OCI-LY7 (cell line): ENCODE measurements at regions of chr17 and their contacts with region 1.

Region 1: GRCh38 chr17:79789534-79790353 is 7.1 kb downstream of the CBX8 start:
- DNase-seq: peak; percentile 70
- H3K4me3 ChIP-seq: no peak overlapping the region
- H3K27ac ChIP-seq: no peak overlapping the region
- H3K4me1 ChIP-seq: peaks cover 8% of the 10 kb centered on the region
- CTCF ChIP-seq: peak; percentile 94

Region 2: GRCh38 chr17:79612468-79613194 is 177.1 kb before region 1 on chr17:
- CTCF ChIA-PET with region 1: no interaction called
- POLR2A ChIA-PET with region 1: no interaction called
- intact Hi-C with region 1: no loop called
- DNase-seq: peak; percentile 72
- H3K4me3 ChIP-seq: no peak overlapping the region
- H3K27ac ChIP-seq: no peak overlapping the region
- H3K4me1 ChIP-seq: no peaks in the 10 kb centered on the region
- CTCF ChIP-seq: peak; percentile 97

Region 3: DNA sequence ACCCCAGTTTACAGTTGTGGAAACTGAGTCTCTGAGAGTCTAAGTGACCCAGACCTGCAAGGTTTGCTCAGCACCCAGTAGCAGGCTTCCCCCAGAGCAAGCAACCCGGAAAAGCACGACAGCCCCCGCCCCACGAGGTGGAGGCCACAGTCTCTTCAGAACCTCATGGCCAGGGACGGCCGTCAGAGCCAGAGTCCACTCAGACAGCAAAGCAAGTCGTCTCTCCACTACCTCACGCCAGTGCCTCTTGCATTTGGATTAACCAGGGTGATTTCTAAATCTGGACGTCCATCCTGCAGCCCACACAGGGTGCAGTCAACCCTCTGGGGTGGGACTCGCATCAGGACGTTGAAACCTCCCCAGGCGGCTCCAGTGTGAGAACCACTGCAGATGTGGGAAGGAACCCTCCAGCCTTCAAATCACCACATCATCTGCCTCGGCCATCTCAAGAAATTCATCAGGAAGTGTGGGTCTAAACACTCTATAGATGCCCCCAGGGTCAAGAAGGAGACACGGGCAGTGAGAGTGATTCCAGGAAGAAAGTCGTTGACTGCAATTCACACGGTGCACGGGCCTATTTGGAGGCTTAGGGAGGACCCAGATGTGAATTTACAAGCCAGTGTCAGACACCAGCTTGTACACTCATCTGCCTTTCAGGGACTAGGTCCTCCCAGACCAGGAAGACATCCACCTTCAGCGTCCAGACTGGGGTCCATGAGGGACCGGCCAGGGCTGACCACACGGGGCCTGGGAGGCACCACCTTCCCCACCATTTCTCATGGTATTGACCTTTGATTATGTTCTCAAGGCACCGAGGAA is 158.7 kb before region 1 on chr17:
- CTCF ChIA-PET with region 1: no interaction called
- POLR2A ChIA-PET with region 1: no interaction called
- intact Hi-C with region 1: no loop called
- DNase-seq: no peak
- H3K4me3 ChIP-seq: no peak overlapping the region
- H3K27ac ChIP-seq: no peak overlapping the region
- H3K4me1 ChIP-seq: no peaks in the 10 kb centered on the region
- CTCF ChIP-seq: no peak

Region 4: DNA sequence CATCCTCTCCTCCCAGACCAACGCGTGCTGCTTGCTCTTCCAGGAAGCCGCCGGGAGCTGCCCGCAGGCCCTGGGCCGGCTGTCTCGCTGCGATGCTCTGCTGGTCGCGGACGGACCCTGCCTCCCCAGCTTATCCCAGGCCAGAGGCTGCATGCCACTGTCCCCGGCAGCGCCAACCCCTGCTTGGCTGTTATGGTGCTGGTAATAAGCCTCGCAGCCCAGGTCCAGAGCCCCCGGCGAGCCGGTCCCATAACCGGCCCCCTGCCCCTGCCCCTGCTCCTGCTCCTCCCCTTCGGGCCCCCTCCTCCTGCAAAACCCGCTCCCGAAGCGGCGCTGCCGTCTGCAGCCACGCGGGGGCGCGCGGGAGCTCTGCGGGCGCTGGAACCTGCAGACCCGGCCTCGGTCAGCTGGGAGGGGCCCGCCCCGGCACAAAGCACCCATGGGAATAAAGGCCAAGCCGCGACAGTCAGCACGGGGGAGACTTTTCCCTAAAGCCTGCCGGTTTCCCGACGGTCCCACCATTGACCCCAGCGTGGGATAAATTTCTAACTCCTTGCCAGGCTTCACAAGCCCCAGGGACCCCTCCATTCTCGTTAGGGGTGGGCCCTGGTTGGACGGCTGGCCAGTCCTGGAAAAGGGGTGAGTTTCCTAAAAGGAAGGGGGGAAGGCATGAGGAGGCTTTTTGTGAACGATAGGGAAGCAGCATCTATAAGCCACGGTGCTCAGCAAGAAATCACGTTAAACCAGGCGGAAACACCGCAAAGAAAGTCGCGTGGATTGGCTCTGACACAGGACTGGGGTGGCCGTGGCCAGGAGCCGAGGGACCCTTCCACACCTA is 47.8 kb before region 1 on chr17:
- CTCF ChIA-PET with region 1: no interaction called
- POLR2A ChIA-PET with region 1: no interaction called
- intact Hi-C with region 1: no loop called
- DNase-seq: peak; percentile 71
- H3K4me3 ChIP-seq: no peak overlapping the region
- H3K27ac ChIP-seq: no peak overlapping the region
- H3K4me1 ChIP-seq: peaks cover 7% of the 10 kb centered on the region
- CTCF ChIP-seq: peak; percentile 98

Region 5: DNA sequence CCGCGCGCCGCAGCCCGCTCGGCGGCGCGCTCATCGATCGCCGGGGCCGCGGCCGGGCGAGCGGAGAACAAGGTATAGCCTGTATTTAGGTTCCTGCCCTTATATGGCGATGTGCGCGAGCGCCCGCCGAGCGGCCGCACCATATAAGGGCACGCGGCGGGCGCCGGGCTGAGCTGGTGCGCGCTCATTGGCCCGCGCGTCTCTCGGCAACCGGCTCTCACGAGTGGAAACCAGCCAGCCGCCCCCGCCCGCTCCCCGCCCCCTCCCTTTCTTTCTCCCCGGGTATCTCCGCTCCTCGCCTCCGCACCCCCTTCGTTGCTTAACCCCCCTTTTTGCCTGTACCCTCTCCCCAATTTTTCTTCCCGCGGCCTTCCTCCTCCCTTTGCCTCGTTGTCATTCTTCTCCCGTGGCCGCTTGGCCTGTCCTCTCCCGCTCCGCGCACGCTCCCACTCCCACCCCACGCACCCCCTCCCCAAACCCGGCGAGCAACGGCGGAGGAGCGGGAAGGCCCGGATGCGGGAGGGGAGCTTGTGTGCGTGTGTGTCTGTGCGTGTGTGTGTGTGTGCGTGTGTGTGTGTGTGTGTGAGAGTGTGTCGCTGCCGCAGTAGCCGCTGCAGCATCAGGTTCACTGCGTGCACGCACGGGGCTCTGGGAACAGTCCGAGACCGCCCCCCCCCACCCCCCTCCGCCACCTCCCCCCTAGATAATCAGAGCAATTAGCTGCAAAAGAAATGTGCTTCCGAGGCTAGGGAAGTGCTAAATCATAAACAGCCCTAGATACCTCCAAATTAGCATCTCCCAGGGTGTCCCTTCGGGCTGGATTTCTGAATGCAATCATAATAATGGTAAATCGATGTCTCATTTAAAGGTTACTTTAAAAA is 20.6 kb after region 1 on chr17:
- CTCF ChIA-PET with region 1: no interaction called
- POLR2A ChIA-PET with region 1: no interaction called
- intact Hi-C with region 1: no loop called
- DNase-seq: peak; percentile 78
- H3K4me3 ChIP-seq: no peak overlapping the region
- H3K27ac ChIP-seq: no peak overlapping the region
- H3K4me1 ChIP-seq: peaks cover 28% of the 10 kb centered on the region
- CTCF ChIP-seq: no peak

Region 6: DNA sequence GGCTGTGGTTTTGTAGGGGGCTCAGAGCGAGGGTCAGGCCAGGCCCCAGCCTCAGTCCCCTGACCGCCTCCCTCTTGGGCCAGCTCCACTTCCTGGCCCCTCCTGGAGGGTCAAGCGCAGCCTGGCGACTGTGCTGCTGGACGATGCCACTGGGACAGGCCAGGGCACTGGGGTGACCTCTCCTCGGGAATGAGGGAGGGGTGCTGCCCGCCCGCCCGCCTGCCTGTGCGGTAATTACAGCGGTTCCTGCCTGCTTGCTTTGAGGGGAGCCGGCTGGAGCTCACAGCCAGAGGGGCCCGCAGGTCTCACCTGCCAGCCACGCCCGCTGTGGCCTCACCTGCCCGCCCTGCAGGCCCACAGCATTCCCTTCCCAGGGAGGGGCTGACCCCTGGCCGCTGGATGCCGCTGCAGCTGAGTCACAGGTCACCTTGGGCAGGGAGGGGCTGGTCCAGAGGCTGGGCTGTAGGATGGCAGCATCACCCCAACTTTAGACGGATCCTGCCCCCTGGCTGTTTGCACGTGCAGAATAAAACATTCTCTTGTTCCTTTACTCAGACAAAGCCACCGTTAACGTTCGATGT is 126.2 kb after region 1 on chr17:
- CTCF ChIA-PET with region 1: no interaction called
- POLR2A ChIA-PET with region 1: no interaction called
- intact Hi-C with region 1: loop called (anchors 2 kb)
- DNase-seq: peak; percentile 51
- H3K4me3 ChIP-seq: no peak overlapping the region
- H3K27ac ChIP-seq: no peak overlapping the region
- H3K4me1 ChIP-seq: no peaks in the 10 kb centered on the region
- CTCF ChIP-seq: peak; percentile 69

Region 7: DNA sequence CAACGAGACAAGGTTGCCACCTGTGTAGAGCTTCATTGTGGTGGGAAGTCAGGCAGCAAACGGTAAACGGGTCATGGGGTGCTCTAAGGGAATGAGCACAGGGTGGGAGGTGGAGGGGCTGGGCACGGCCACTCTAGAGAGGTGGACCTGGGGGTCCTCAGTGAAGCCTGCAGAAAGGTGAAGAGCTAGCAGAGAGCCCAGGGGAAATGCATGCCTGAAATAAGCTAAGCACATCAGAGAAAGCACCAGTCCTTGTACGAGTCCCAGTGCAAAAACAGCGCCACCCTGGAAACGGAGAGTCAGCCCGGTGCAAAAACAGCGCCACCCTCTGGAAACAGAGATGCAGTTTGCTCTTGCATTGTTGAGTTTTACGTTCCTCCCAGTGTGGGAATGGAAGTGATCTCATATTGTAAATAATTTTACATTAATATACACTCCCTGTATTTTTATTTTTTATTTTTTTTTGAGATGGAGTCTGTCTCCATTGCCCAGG is 180.9 kb after region 1 on chr17:
- CTCF ChIA-PET with region 1: no interaction called
- POLR2A ChIA-PET with region 1: no interaction called
- intact Hi-C with region 1: loop called (anchors 2 kb)
- DNase-seq: peak; percentile 82
- H3K4me3 ChIP-seq: no peak overlapping the region
- H3K27ac ChIP-seq: no peak overlapping the region
- H3K4me1 ChIP-seq: peaks cover 7% of the 10 kb centered on the region
- CTCF ChIP-seq: peak; percentile 96